ENCODE measurements at regions of chr6 and their contacts with region 1.

Region 1: DNA sequence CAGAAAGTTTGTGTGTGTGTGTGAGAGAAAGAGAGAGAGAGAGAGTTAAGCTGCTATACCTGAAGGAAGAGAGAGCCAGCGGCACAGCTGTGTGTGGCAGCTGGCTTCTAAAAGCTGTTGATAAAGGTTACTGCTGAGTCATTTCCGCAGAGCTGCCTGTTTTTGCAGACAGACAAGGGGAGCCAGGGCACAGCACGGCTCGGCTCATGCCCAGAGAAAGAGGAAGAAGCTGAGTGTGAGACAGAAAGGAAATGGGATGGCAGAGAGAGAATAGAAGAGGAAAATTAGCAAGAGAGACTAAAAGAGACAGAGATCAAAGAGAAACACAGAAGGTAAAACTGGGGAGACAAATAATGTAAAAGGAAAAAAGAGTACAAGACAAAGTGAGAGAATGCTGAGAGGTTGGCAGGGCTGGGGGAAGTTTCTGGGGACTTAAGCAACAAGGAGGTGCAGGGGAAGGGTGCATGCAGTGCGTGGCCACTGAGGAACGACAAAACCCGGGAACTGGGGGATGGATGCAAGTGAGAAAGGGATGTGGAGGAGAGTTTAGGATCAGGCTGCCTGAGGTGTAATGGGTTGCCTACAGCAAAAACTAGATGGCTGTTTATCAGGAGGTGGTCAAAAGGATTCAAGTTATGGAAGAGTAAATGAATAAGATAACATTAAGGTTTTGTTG is 22.7 kb downstream of the HLA-A start:
- DNase-seq: peak; percentile 76 to 89
- H3K4me3 ChIP-seq: peak overlapping the region; percentile 50
- H3K27ac ChIP-seq: peak overlapping the region; percentile 81
- H3K4me1 ChIP-seq: peaks cover 46% of the 10 kb centered on the region
- H3K27me3 ChIP-seq: no peaks in the 10 kb centered on the region
- CTCF ChIP-seq: no peak

Region 2: GRCh38 chr6:29942275-29943052 is 22.6 kb before region 1 on chr6 and contains the start of gene HLA-A:
- CTCF ChIA-PET with region 1: interaction called, 3 read pairs
- POLR2A ChIA-PET with region 1: no interaction called
- intact Hi-C with region 1: loop called (anchors 1 kb)
- DNase-seq: peak; percentile 85 to 86
- H3K4me3 ChIP-seq: peak within 1 kb of the TSS; percentile 55
- H3K27ac ChIP-seq: no peak within 1 kb of the TSS
- H3K4me1 ChIP-seq: no peaks in the 10 kb centered on the region
- H3K27me3 ChIP-seq: no peaks in the 10 kb centered on the region
- CTCF ChIP-seq: no peak
- total RNA-seq, gene HLA-A: 168 and 261 TPM in 2 replicates

Region 3: GRCh38 chr6:30006170-30007131 is 41.4 kb after region 1 on chr6:
- CTCF ChIA-PET with region 1: no interaction called
- POLR2A ChIA-PET with region 1: no interaction called
- intact Hi-C with region 1: loop called (anchors 1 kb)
- DNase-seq: peak in 1 of 2 experiments; percentile 23
- H3K4me3 ChIP-seq: no peak overlapping the region
- H3K27ac ChIP-seq: no peak overlapping the region
- H3K4me1 ChIP-seq: no peaks in the 10 kb centered on the region
- H3K27me3 ChIP-seq: no peaks in the 10 kb centered on the region
- CTCF ChIP-seq: no peak

Region 4: GRCh38 chr6:30066577-30067459 is 101.8 kb after region 1 on chr6 and contains the start of gene PPP1R11:
- CTCF ChIA-PET with region 1: no interaction called
- POLR2A ChIA-PET with region 1: no interaction called
- intact Hi-C with region 1: loop called (anchors 5 kb)
- DNase-seq: peak; percentile 96 to 99
- H3K4me3 ChIP-seq: peak within 1 kb of the TSS; percentile 81
- H3K27ac ChIP-seq: peak within 1 kb of the TSS; percentile 40
- H3K4me1 ChIP-seq: peaks cover 24% of the 10 kb centered on the region
- H3K27me3 ChIP-seq: no peaks in the 10 kb centered on the region
- CTCF ChIP-seq: no peak
- total RNA-seq, gene PPP1R11: 48.3 and 49.3 TPM in 2 replicates

Region 5: DNA sequence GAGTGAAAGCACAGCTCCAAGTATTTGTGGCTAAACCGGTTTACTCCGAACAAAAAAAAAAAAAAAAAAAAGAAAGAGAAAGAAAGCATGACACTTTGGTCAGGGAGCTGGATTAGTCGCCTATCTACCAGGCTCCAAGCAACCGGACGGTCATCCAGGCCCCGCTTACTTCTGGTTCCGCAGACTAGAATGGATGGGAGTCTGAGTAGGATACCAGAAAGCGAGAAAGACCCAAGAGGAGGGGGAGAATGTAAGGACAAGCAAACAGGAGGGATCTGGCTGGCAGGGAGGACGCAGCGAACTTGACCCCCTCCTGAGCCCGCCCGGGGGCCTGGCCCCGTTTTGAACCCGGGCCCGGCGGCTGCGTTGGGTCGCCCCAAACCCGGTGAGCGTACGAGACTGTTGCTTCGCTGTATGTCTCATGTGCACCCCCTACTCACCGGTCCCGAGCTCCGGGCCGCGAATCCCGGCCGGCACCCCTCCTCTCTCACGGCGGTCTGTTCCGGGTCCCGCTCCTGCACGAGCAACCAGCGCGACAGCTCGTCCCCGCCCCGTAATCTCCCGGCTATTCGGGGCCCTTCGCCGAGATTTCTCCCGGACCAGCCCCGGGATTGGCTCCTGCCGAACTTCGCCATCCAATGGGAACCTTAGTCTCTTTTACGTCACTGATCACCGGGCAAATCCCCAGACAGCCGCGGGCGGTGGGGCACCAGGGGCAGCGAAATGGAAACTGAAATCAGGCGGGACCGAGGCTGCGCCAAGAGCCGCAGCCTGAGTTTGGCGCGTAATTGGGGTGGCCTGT is 248.0 kb after region 1 on chr6 and contains the start of gene TRIM26:
- CTCF ChIA-PET with region 1: no interaction called
- POLR2A ChIA-PET with region 1: interaction called, 14 read pairs
- intact Hi-C with region 1: no loop called
- DNase-seq: peak; percentile 94 to 99
- H3K4me3 ChIP-seq: peak within 1 kb of the TSS; percentile 95
- H3K27ac ChIP-seq: peak within 1 kb of the TSS; percentile 83
- H3K4me1 ChIP-seq: peaks cover 27% of the 10 kb centered on the region
- H3K27me3 ChIP-seq: no peaks in the 10 kb centered on the region
- CTCF ChIP-seq: no peak
- total RNA-seq, gene TRIM26: 45.3 and 53.9 TPM in 2 replicates

Measured in PC-9 (cell line).